ENCODE measurements at regions of chr12 and their contacts with region 1.

Region 1: DNA sequence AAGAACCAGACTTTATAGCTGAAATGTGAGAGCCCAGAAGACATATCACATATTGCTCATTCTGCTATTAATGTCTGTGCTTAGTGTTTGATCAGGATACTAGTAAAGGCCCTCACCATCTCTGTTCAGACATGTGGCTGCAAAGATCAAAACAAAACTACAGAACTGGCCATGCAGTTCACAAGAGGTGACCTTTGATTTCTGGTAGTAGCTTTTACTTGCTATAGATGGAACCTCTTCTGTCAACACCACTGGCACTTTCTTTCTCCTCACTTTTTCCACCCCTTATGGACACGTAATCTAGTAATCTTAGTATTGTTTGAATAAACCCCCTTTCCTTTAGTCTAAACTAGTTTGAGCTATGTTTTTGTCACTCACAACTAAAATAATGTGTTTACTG is 214.8 kb downstream of the EPS8 start:
- DNase-seq: no peak
- ATAC-seq: no peak
- H3K4me3 ChIP-seq: no peak overlapping the region
- H3K27ac ChIP-seq: no peak overlapping the region
- H3K4me1 ChIP-seq: no peaks in the 10 kb centered on the region; the same call in 1 of the 2 replicates
- H3K27me3 ChIP-seq: no peaks in the 10 kb centered on the region
- CTCF ChIP-seq: no peak

Region 2: DNA sequence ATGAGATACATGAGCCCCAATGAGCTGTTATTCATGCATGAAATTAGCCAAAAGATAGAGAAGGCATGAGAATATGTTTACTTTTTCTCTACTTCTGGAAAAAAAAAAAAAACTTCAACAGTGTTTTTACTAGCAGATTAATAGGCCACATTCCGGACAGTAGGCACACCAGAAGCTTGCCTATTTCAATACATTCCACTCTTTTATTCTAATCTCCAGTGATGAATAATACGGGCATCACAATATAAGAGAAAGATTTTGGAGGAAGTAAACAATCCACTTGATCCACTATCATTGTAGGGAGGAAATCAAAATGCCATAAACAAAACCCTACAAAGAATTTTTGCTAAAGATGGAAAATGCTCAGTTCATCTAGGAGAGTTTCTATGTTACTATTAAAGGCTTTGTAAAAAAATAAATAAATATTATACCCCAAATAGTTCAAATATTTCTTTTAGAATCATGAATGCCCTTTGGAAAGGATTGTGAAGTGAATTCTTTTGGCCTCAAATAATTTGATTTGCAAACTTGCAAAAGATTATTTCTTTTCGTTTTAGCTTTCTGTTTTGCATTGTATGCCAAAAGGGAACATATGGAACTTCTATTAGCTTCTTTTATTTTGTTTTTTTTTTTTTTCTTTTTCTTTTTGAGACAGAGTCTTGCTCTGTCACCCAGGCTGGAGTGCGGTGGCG is 17.8 kb before region 1 on chr12:
- CTCF ChIA-PET with region 1: no interaction called
- POLR2A ChIA-PET with region 1: interaction called, 12 read pairs
- in situ Hi-C with region 1: no loop called
- intact Hi-C with region 1: no loop called
- DNase-seq: no peak
- ATAC-seq: no peak
- H3K4me3 ChIP-seq: no peak overlapping the region
- H3K27ac ChIP-seq: no peak overlapping the region
- H3K4me1 ChIP-seq: no peaks in the 10 kb centered on the region
- H3K27me3 ChIP-seq: no peaks in the 10 kb centered on the region
- CTCF ChIP-seq: no peak